ENCODE measurements at regions of chr17 and their contacts with region 1.

Region 1: DNA sequence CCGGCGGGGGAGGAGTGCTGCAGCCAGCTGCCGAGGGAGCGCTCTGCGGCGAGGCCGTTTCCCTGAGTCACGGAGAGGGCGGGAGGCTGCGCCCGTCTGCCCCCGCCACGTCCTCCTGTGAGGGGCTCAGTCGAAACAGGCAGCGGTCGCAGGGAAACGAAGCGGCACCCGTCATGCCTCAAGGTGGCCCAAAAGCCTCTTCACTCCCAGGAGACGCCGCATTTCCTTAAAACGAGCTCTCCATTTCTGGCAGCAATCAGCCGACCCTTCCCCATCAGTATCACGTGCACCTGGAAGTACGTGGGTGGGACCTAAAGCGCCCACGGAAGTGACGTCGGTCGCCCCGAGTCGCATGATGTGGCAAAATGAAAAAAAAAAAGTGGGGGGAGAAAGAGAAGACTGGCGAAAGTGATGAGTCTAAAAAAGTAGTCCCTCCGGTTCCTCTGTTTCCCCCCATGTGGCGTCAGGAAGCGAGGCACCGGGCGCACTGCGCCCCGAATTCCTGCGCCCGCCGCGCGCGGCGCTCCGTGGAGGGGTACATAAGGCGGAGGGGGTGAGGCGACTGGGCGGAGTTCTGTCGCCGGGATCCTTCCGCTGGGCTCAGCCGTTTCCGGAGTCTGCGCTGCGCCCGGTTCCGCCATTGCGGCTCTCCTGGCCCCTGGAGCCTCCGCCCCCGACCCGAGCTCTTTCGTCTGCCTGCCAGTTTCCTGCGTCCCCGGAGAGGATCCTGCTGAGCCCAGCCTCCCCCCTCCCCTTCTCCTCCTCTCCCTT is at the start of gene CLTC:
- DNase-seq: peak; percentile 90
- H3K4me3 Mint-ChIP-seq: peak within 1 kb of the TSS; percentile 97
- H3K27ac Mint-ChIP-seq: peak within 1 kb of the TSS; percentile 100
- H3K4me1 Mint-ChIP-seq: peaks cover 57% of the 10 kb centered on the region
- H3K27me3 Mint-ChIP-seq: no peaks in the 10 kb centered on the region
- total RNA-seq, gene CLTC: 176 and 186 TPM in 2 replicates

Region 2: GRCh38 chr17:59106463-59107305 is 512.8 kb before region 1 on chr17 and contains the start of gene TRIM37:
- intact Hi-C with region 1: loop called (anchors 10 kb)
- DNase-seq: peak; percentile 100
- H3K4me3 Mint-ChIP-seq: peak within 1 kb of the TSS; percentile 97
- H3K27ac Mint-ChIP-seq: peak within 1 kb of the TSS; percentile 90
- H3K4me1 Mint-ChIP-seq: peaks cover 66% of the 10 kb centered on the region
- H3K27me3 Mint-ChIP-seq: peaks cover 1% of the 10 kb centered on the region
- total RNA-seq, gene TRIM37: 27.5 and 27.7 TPM in 2 replicates

Region 3: DNA sequence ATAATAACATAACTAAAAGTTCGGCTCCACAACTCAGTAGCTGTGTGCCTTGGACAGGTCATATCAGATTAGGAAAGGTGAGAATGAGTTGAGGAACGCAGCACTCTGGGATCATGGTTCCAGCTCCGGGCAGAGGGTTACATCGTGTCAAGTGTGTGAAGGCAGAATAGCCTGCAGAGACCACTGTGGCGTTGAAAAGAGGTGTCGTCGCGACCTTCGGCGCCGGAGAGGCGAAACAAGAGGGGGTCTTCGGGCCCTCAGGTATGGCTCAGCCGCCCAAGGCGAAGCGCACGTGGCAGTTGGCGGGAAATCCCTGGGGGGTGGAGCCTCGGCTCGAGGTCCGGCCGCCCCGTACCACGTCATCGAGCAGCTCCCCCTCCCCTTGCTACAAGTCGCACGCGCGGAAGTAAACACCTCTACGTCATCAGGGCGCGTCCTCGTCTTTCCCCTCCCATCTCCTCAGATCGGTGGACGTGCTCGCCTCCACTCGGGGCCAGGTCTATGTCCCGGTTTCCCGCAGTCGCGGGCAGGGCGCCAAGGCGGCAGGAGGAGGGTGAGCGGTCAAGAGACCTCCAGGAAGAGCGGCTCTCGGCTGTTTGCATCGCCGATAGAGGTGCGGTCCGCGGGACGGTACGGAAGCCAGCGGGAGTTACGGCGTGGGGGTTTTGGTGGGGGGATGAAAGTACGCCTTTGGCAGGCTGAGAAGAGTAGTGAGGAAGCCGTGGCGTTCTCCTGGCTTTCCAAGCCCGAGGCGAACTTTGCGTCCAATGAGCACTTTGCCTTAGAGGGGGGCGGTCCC is 54.1 kb before region 1 on chr17 and contains the start of gene DHX40:
- intact Hi-C with region 1: loop called (anchors 1 kb)
- DNase-seq: peak; percentile 90
- H3K4me3 Mint-ChIP-seq: peak within 1 kb of the TSS; percentile 100
- H3K27ac Mint-ChIP-seq: peak within 1 kb of the TSS; percentile 100
- H3K4me1 Mint-ChIP-seq: peaks cover 24% of the 10 kb centered on the region
- H3K27me3 Mint-ChIP-seq: peaks cover 7% of the 10 kb centered on the region
- total RNA-seq, gene DHX40: 16.8 and 17.1 TPM in 2 replicates

Region 4: DNA sequence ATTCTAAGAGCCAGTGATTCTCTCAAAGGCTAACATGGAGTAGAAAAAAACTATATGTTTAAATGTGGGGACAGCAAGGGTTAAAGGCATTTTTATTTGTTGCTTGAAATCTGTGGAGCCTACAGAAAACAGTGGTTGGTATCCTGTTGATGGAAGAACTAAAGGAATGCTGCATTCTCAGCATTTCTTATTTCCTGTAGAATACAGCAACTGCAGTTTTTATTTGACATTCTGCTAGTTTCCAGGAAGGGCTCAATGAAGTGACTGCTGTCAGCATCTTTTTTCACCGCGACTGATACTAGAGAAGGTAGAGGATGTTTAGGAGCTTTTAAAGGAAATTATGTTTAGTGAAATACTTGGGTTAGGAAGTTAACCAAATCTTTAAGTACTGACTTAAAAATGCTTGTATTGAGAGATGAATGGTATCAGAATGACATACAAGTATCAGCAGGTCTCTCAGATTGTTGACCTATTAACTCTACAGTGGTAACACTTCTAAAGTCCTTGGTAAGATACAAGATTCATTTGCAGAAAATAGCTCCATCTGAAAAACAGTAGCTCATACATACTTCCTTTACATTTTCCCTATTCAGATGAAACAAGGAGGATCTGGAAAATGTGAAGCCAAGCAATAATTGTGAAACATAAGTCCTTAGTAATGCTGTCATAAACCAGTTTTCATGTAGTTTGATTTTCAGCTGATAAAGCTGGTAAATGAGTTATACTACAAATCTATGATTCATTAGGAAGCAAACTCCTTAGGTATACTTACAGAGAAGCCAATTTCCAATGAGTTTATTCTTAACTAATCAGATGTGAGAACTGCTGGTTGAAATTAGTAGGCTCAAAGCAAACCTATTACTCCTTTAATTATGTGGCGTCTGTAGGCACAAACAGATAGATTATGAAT is 15.4 kb after region 1 on chr17:
- intact Hi-C with region 1: loop called (anchors 2 kb)
- DNase-seq: no peak
- H3K4me3 Mint-ChIP-seq: peak overlapping the region; percentile 45
- H3K27ac Mint-ChIP-seq: peak overlapping the region; percentile 53
- H3K4me1 Mint-ChIP-seq: peaks cover 52% of the 10 kb centered on the region
- H3K27me3 Mint-ChIP-seq: no peaks in the 10 kb centered on the region

Region 5: GRCh38 chr17:59837308-59838051 is 218.0 kb after region 1 on chr17:
- intact Hi-C with region 1: loop called (anchors 5 kb)
- DNase-seq: peak; percentile 81
- H3K4me3 Mint-ChIP-seq: peak overlapping the region; percentile 96
- H3K27ac Mint-ChIP-seq: peak overlapping the region; percentile 99
- H3K4me1 Mint-ChIP-seq: peaks cover 27% of the 10 kb centered on the region
- H3K27me3 Mint-ChIP-seq: peaks cover 2% of the 10 kb centered on the region

Measured in activated T-helper 1 cell treated with anti-CD3 and anti-CD28 coated beads, Interleukin-12 subunit alpha, Interleukin-12 subunit beta, Interleukin-2, Interleukin-4 antibody, amounts not matched to agents 30 ng/mL and 10 ng/mL and 1 ng/mL, durations not matched to agents 14 hours and 24 hours and 36 hours (primary cell).